ENCODE measurements at regions of chr18 and their contacts with region 1.

Region 1: GRCh38 chr18:45402485-45403056 is 212.7 kb upstream of the SLC14A2 start:
- DNase-seq: peak; percentile 8
- H3K4me3 ChIP-seq: no peak overlapping the region
- CTCF ChIP-seq: no peak

Region 2: GRCh38 chr18:44786688-44787087 is 615.9 kb before region 1 on chr18:
- in situ Hi-C with region 1: no loop called
- DNase-seq: no peak
- H3K4me3 ChIP-seq: no peak overlapping the region
- CTCF ChIP-seq: no peak

Region 3: GRCh38 chr18:45303026-45303425 is 99.5 kb before region 1 on chr18:
- in situ Hi-C with region 1: no loop called
- DNase-seq: no peak
- H3K4me3 ChIP-seq: no peak overlapping the region
- CTCF ChIP-seq: no peak

Region 4: DNA sequence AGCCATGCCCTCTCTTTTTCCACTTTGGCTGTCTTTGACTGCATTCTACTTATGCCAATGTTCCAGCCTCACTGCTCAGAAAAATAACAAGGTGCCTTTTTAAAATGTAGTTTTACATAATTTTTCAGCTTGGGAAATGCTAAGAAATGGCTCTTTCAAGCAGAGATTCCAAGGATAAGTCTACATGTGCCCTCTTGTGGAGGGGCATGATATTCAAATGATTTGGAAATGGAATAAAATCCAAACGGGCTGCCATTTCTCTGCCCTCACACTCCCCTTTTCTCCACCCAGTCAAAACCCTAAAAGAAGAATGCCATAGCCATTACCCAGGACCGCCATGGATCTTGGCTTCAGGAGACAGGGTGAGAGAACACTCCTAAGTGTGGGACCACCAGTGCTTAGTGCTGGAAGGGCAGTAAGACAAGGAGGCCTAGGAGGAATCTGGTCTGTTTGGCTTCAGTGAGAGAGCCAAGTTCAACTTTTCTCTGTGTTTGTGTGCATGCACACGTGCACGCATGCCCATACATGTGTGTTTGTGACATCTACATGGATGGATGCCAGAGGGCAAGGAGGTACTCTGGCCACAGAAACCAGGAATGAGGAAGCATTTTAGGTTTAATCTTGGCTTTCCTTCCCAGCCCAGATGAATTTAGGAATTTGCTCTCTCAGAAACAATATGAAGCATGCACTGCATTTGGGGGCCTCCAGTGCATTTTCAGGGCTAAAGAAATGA is 38.7 kb after region 1 on chr18:
- in situ Hi-C with region 1: loop called (anchors 5 kb)
- DNase-seq: no peak
- H3K4me3 ChIP-seq: no peak overlapping the region
- CTCF ChIP-seq: peak; percentile 18

Region 5: GRCh38 chr18:45488645-45489044 is 86.1 kb after region 1 on chr18:
- in situ Hi-C with region 1: no loop called
- DNase-seq: no peak
- H3K4me3 ChIP-seq: no peak overlapping the region
- CTCF ChIP-seq: no peak

Measured in astrocyte of the cerebellum (primary cell).